ENCODE measurements at regions of chr20 and their contacts with region 1.

Region 1: GRCh38 chr20:53157443-53158408 is 185.6 kb downstream of the TSHZ2 start:
- H3K4me3 Mint-ChIP-seq: no peak overlapping the region
- H3K27ac Mint-ChIP-seq: no peak overlapping the region
- H3K4me1 Mint-ChIP-seq: peaks cover 9% of the 10 kb centered on the region
- H3K27me3 Mint-ChIP-seq: peaks cover 2% of the 10 kb centered on the region

Region 2: DNA sequence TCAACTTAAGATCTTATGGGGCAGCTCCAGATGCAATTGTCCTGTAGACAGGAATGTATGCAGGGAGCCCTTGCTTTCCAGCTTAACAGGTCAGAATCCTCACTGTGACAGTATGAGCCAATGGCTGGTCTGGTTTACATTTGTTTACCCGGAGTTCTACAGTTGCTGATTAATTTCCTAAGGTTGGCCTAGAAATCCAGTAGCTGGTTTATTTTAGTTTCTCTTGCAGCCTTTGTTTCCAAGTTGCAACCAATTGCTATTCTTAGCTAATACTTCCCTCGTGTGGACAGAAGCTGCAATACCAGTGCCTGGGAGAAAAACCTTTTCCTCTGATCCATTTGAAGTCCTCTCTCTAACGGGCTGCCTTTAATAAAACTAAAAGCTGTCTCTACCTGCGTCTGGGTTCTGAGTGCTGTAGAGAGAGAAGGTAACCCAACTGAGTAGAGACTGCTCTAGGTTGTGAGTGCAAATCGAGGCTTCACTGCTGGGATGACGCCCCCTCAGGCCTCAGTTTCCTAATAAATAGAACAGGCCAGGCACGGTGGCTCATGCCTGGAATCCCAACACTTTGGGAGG is 390.0 kb after region 1 on chr20:
- intact Hi-C with region 1: loop called (anchors 1 kb)
- H3K4me3 Mint-ChIP-seq: no peak overlapping the region
- H3K27ac Mint-ChIP-seq: no peak overlapping the region
- H3K4me1 Mint-ChIP-seq: no peaks in the 10 kb centered on the region
- H3K27me3 Mint-ChIP-seq: no peaks in the 10 kb centered on the region